PC-9 (cell line): ENCODE measurements at regions of chr5 and their contacts with region 1.

Region 1: GRCh38 chr5:138370537-138370936 is 18.1 kb downstream of the KDM3B start:
- DNase-seq: no peak
- H3K4me3 ChIP-seq: no peak overlapping the region
- H3K27ac ChIP-seq: no peak overlapping the region
- H3K4me1 ChIP-seq: no peaks in the 10 kb centered on the region
- H3K27me3 ChIP-seq: no peaks in the 10 kb centered on the region
- CTCF ChIP-seq: no peak

Region 2: GRCh38 chr5:138515556-138516245 is 145.2 kb after region 1 on chr5:
- CTCF ChIA-PET with region 1: no interaction called
- POLR2A ChIA-PET with region 1: interaction called, 20 read pairs
- intact Hi-C with region 1: no loop called
- DNase-seq: no peak
- H3K4me3 ChIP-seq: no peak overlapping the region
- H3K27ac ChIP-seq: no peak overlapping the region
- H3K4me1 ChIP-seq: no peaks in the 10 kb centered on the region
- H3K27me3 ChIP-seq: no peaks in the 10 kb centered on the region
- CTCF ChIP-seq: no peak